WTC11 (cell line): ENCODE measurements at regions of chr1 and their contacts with region 1.

Region 1: DNA sequence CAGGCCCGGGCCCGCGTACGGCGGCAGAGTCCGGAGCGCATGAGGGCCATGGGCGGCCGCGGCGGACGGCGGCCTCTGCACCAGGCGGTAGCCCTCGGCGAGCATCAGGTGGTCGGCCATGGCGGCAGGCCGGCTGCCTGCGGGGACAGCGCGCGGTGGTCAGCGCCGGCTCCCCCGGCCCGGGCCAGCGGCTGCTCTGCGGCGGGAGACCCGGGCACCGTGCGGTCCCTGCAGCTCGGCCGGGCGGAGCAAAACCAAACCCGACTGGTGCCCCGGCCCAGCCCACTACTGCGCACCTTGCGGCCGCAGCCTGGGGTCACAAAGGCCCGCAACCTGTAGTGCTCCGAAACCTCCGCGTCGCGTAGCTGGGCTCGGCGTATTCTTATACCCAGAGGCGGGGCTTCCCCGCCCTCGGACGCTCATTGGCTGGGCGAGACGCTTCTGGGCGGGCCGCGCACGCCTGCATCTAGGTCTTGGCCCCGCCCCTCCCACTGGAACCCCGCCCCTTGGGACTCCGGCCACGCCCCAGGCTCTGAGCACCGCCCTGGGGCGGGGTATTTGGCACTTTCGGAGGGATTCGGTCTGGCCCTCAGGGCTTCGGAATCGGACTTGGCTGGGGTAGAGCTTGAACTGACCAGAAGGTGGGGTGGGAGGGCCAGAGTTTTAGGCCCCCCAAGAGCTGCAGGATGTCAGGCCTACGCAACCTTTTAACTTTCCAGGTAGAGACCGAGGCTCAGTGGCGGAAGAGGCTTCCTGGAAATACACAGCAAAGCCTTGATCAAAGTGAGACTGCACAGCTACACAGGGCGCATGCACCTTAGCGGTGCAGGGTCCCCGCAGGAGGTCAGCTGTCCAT is at the start of gene CITED4:
- DNase-seq: peak; percentile 98
- ATAC-seq: peak; percentile 91
- H3K4me3 Mint-ChIP-seq: peak within 1 kb of the TSS; percentile 71
- H3K27ac Mint-ChIP-seq: no peak within 1 kb of the TSS
- H3K4me1 Mint-ChIP-seq: peaks cover 18% of the 10 kb centered on the region
- H3K27me3 Mint-ChIP-seq: peaks cover 32% of the 10 kb centered on the region
- CTCF ChIP-seq: no peak
- total RNA-seq, gene CITED4: 22.3 to 24.6 TPM (median 23.9 TPM) in 3 replicates

Region 2: GRCh38 chr1:40849801-40850592 is 12.2 kb before region 1 on chr1:
- CTCF ChIA-PET with region 1: interaction called, 18 read pairs
- POLR2A ChIA-PET with region 1: no interaction called
- DNase-seq: peak; percentile 77
- ATAC-seq: peak; percentile 71
- H3K4me3 Mint-ChIP-seq: no peak overlapping the region
- H3K27ac Mint-ChIP-seq: no peak overlapping the region
- H3K4me1 Mint-ChIP-seq: peaks cover 10% of the 10 kb centered on the region
- H3K27me3 Mint-ChIP-seq: no peaks in the 10 kb centered on the region
- CTCF ChIP-seq: peak; percentile 91

Region 3: DNA sequence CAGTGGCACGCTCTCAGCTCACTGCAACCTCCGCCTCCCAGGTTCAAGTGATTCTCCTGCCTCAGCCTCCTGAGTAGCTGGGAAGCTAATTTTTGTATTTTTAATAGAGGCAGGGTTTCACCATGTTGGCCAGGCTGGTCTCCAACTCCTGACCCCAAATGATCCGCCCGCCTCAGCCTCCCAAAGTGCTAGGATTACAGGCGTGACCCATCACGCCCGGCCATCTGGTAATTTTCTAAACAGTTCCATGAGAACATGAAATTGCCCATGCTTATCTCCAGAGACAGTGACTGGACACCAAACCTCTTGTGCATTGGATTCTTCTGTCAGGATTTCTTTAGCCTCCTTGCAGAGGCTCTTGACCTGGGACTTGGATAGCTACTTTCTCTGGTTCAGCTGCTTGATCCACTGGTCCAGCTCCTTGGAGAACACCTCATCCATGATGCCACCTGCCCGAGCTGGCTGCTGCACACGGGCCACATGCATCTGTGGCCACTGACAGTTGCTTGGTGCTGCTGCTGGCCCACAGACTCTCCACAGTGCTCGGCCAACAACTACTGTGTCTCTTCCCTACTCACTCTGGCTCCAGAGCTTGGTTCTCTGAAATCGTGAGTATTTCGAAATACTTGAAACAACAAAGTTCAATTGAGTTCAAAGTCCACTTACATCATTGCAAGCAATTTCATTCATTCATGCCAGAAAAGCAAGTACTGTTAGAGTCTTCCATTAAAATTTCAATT is 77.3 kb after region 1 on chr1:
- CTCF ChIA-PET with region 1: interaction called, 18 read pairs
- POLR2A ChIA-PET with region 1: interaction called, 3 read pairs
- DNase-seq: no peak
- ATAC-seq: no peak
- H3K4me3 Mint-ChIP-seq: no peak overlapping the region
- H3K27ac Mint-ChIP-seq: no peak overlapping the region
- H3K4me1 Mint-ChIP-seq: peaks cover 4% of the 10 kb centered on the region
- H3K27me3 Mint-ChIP-seq: no peaks in the 10 kb centered on the region; the same call in 1 of the 2 replicates
- CTCF ChIP-seq: no peak

Region 4: GRCh38 chr1:40979233-40980067 is 117.2 kb after region 1 on chr1 and contains the start of gene CTPS1:
- CTCF ChIA-PET with region 1: interaction called, 13 read pairs
- POLR2A ChIA-PET with region 1: interaction called, 11 read pairs
- DNase-seq: peak; percentile 94
- ATAC-seq: peak; percentile 87
- H3K4me3 Mint-ChIP-seq: peak within 1 kb of the TSS; percentile 83
- H3K27ac Mint-ChIP-seq: peak within 1 kb of the TSS; percentile 81
- H3K4me1 Mint-ChIP-seq: peaks cover 23% of the 10 kb centered on the region
- H3K27me3 Mint-ChIP-seq: no peaks in the 10 kb centered on the region
- CTCF ChIP-seq: no peak
- total RNA-seq, gene CTPS1: 65.7 to 73.4 TPM (median 65.8 TPM) in 3 replicates